Right cardiac atrium (tissue), 5 donors: ENCODE measurements at regions of chr1 and their contacts with region 1.

Region 1: GRCh38 chr1:197180252-197180878 is 33.9 kb upstream of the ASPM start:
- DNase-seq: no peak
- ATAC-seq: peak; percentile 51
- H3K4me3 ChIP-seq: no peak overlapping the region
- H3K27ac ChIP-seq: no peak overlapping the region
- H3K4me1 ChIP-seq: no peaks in the 10 kb centered on the region
- H3K27me3 ChIP-seq: no peaks in the 10 kb centered on the region

Region 2: DNA sequence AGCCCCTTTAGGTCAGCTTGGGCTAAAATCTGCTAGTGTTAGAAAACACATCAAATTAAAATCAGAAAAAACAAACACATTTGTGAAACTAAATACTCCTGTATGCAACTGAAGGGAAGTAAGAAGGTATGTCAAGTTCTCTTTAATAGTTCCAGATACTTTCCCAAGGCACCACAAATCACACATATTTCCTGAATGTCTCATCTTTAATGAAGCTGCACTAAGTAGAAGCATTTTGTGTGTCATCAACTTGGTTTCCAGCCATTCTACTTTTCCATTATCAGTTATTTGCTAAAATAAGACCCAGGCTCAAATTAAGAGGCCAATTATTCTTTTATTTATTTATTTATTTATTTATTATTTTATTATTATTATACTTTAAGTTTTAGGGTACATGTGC is 122.4 kb after region 1 on chr1:
- intact Hi-C with region 1: no loop called
- DNase-seq: no peak
- ATAC-seq: no peak
- H3K4me3 ChIP-seq: no peak overlapping the region
- H3K27ac ChIP-seq: no peak overlapping the region
- H3K4me1 ChIP-seq: peaks cover 2% of the 10 kb centered on the region
- H3K27me3 ChIP-seq: no peaks in the 10 kb centered on the region

Region 3: GRCh38 chr1:197356723-197357533 is 176.6 kb after region 1 on chr1:
- intact Hi-C with region 1: loop called in 3 of 4 experiments (anchors 5 to 10 kb)
- DNase-seq: no peak
- ATAC-seq: peak; percentile 60 to 68
- H3K4me3 ChIP-seq: no peak overlapping the region
- H3K27ac ChIP-seq: no peak overlapping the region
- H3K4me1 ChIP-seq: peaks cover 3% of the 10 kb centered on the region
- H3K27me3 ChIP-seq: no peaks in the 10 kb centered on the region

Region 4: DNA sequence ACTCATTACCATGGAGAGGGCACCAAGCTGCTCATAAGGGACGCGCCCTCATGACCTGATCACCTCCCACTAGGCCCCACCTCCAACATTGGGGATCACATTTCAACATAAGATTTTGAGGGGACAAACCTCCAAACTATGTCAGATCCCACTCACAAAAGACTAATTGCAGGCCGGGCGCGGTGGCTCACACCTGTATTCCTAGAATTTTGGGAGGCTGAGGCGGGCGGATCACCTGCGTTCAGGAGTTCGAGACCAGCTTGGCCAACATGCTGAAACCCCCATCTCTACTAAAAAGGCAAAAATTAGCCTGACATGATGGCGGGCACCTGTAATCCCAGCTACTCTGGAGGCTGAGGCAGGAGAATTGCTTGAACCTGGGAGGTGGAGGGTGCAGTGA is 316.4 kb after region 1 on chr1:
- intact Hi-C with region 1: no loop called
- DNase-seq: no peak
- ATAC-seq: no peak
- H3K4me3 ChIP-seq: no peak overlapping the region
- H3K27ac ChIP-seq: no peak overlapping the region
- H3K4me1 ChIP-seq: no peaks in the 10 kb centered on the region
- H3K27me3 ChIP-seq: no peaks in the 10 kb centered on the region